ENCODE measurements at regions of chr3 and their contacts with region 1.

Region 1: DNA sequence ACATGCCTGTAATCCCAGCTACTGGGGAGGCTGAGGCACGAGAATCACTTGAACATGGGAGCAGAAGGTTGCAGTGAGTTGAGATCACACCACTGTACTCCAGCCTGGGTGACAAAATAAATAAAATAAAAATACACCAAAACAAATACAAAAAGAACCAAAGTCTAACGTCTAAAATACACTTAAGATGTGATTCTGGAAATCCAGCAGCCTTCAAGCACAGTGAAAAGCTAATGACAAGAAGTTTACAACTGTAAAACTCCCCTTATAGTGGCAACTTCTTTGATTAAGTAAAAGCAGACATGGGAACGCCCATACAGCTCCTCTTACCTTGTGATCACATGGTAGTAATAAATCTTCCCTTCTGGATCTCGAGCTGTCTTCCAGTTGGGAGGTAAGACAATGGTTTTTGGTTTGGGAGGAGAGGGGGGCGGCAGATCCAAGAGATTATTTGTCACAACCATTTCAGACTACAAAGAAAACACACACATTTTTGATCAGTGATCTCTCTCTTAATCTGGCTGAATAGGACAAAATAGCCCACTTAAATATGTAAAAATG is 62.8 kb downstream of the NBEAL2 start:
- DNase-seq: peak in 3 of 4 experiments; percentile 32 to 62 (median 33)
- ATAC-seq: peak; percentile 85
- H3K4me3 ChIP-seq: no peak overlapping the region
- H3K27ac ChIP-seq: 0 out of 3 replicates have a peak overlapping the region, but pooled peaks have one; percentile 0
- H3K4me1 ChIP-seq: peaks cover 10 to 16% of the 10 kb centered on the region in 2 experiments
- H3K27me3 ChIP-seq: no peaks in the 10 kb centered on the region
- CTCF ChIP-seq: no peak
- EP300 ChIP-seq: no peak
- POLR2A ChIP-seq: no peak
- RAD21 ChIP-seq: no peak

Region 2: DNA sequence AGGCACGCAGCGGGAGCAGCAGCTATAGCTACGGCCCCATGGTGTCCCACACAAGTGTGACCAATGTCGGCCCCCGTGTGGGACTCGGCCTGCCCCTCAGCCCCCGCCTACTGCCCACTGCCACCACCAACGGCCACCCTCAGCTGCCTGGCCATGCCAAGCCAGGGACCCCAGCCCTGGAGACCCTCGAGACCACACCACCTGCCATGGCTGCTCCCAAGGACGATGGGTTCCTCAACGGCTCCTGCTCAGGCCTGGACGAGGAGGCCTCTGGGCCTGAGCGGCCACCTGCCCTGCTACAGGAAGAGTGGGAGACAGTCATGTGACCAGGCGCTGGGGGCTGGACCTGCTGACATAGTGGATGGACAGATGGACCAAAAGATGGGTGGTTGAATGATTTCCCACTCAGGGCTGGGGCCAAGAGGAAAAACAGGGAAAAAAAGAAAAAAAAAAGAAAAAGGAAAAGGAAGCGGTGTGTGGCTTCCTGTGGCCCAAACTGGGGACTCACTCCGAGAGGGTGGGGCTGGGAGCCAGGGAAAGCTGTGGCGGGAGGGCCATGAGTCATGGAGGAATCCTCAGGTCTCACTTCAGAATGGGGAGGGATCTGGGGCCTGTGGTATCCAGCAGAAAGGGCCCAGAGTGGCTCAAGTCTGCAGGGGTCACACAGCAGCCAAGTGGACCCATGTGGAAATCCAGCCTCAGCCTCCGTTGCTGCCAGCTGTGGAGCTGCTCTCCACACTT is 138.8 kb before region 1 on chr3:
- CTCF ChIA-PET with region 1: no interaction called
- POLR2A ChIA-PET with region 1: no interaction called
- in situ Hi-C with region 1: no loop called
- intact Hi-C with region 1: no loop called
- DNase-seq: peak; percentile 54 to 71 (median 63)
- ATAC-seq: peak; percentile 56
- H3K4me3 ChIP-seq: no peak overlapping the region
- H3K27ac ChIP-seq: no peak overlapping the region
- H3K4me1 ChIP-seq: peaks cover 0 to 43% of the 10 kb centered on the region in 2 experiments; a peak in 4 of 5 replicates
- H3K27me3 ChIP-seq: peaks cover 5 to 48% of the 10 kb centered on the region in 2 experiments; a peak in 3 of 5 replicates
- CTCF ChIP-seq: no peak
- EP300 ChIP-seq: no peak
- POLR2A ChIP-seq: no peak
- RAD21 ChIP-seq: no peak

Region 3: GRCh38 chr3:47024932-47025331 is 17.4 kb before region 1 on chr3:
- CTCF ChIA-PET with region 1: no interaction called
- POLR2A ChIA-PET with region 1: interaction called, 16 read pairs
- in situ Hi-C with region 1: no loop called
- intact Hi-C with region 1: no loop called
- DNase-seq: no peak
- ATAC-seq: peak; percentile 47
- H3K4me3 ChIP-seq: no peak overlapping the region
- H3K27ac ChIP-seq: no peak overlapping the region
- H3K4me1 ChIP-seq: no peaks in the 10 kb centered on the region; a peak in 1 of 5 replicates
- H3K27me3 ChIP-seq: no peaks in the 10 kb centered on the region
- CTCF ChIP-seq: no peak
- EP300 ChIP-seq: no peak
- POLR2A ChIP-seq: no peak
- RAD21 ChIP-seq: peak in 1 of 2 experiments; percentile 20; a peak in 1 of 4 replicates

Measured in K562 (cell line).